Heart left ventricle (tissue), 16 donors: ENCODE measurements at regions of chr6 and their contacts with region 1.

Region 1: GRCh38 chr6:71393981-71394432 is 105.4 kb downstream of the OGFRL1 start:
- DNase-seq: no peak
- ATAC-seq: peak; percentile 29 to 52 (median 46)
- H3K4me3 ChIP-seq: no peak overlapping the region
- H3K27ac ChIP-seq: peak overlapping the region; percentile 20 to 76 (median 44)
- H3K4me1 ChIP-seq: peaks cover 5 to 81% (median 52%) of the 10 kb centered on the region in 12 donors
- H3K27me3 ChIP-seq: no peaks in the 10 kb centered on the region
- CTCF ChIP-seq: no peak
- POLR2A ChIP-seq: no peak

Region 2: DNA sequence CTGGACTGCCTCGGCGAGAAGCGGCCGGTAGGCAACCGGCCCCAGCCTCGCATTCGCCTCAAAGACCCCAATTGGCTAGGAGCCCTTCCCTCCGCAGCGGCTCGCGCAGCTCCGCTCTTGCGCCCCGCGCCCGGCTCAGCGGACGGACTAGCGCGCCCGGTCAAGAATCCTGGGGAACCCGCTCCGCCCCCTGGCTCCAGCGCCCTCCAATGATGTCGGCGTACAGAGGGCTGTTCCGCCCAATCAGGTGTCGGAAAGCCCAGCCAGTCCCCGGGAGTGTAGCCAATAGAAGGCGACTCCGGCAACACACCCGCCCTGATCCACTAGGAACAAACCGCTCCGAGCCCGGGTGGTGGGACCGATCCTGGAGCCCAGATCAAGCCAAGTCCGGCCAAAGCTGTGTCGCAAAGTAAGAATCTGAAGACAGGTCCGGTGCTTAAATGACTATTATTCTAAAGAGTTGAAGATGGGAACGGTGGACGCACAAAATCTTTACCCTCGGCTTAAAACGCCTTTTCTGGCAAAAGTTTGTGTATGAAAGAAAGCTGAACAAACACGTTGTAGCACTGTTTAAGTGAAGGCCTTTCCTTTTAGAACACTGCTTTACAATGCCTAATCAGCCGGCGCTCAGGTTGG is 26.8 kb after region 1 on chr6:
- intact Hi-C with region 1: loop called in 4 of 10 experiments (anchors 2 to 5 kb)
- DNase-seq: peak; percentile 95 to 98 (median 98)
- ATAC-seq: peak; percentile 98 to 99 (median 99)
- H3K4me3 ChIP-seq: peak overlapping the region; percentile 74 to 94 (median 88)
- H3K27ac ChIP-seq: peak overlapping the region; percentile 89 to 99 (median 97)
- H3K4me1 ChIP-seq: peaks cover 4 to 28% (median 19%) of the 10 kb centered on the region in 12 donors
- H3K27me3 ChIP-seq: peaks cover 0 to 20% (median 0%) of the 10 kb centered on the region in 9 donors
- CTCF ChIP-seq: peak in 1 of 12 donors; percentile 11
- POLR2A ChIP-seq: peak; percentile 87 to 99

Region 3: GRCh38 chr6:71481011-71481410 is 87.0 kb after region 1 on chr6:
- intact Hi-C with region 1: loop called in 1 of 10 experiments (anchors 2 kb)
- DNase-seq: no peak
- ATAC-seq: peak in 1 of 4 donors; percentile 33
- H3K4me3 ChIP-seq: no peak overlapping the region
- H3K27ac ChIP-seq: peak overlapping the region in 10 of 12 donors; percentile 19 to 83 (median 64)
- H3K4me1 ChIP-seq: peaks cover 0 to 43% (median 22%) of the 10 kb centered on the region in 12 donors
- H3K27me3 ChIP-seq: no peaks in the 10 kb centered on the region
- CTCF ChIP-seq: no peak
- POLR2A ChIP-seq: no peak

Region 4: DNA sequence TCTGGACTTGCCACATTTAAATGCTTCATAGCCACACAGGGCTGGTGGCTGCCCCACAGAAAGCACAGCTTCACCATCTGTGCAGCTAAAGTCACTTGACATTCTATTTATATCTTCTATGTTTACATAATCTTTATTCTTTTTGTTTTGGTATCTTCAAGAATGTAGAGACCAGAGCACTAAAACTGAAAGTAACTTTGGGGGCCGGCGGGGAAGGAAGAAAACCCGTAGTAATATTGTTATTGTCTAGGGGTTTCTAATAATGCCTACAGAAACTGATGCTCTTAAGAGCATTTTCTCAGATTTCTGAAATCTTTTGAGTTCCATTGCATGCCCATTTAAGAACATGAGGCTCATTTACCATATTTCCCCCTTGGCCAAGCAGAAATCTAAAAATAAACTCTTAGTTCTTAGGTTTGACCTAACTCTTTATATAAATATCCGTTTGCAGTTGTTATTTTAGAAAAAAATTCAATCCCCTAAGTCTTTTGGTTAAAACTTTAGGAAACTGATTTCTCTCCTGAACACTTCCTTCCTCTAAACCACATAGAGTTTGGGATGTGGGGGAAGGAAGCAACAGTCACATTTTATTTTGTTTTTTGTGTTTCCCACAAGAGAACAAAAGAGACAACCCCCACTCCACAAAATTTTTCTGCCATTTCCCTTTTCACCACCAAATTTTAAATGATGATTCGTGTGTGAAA is 102.2 kb after region 1 on chr6:
- intact Hi-C with region 1: loop called in 1 of 10 experiments (anchors 5 kb)
- DNase-seq: no peak
- ATAC-seq: peak in 3 of 4 donors; percentile 18 to 62 (median 39)
- H3K4me3 ChIP-seq: peak overlapping the region in 11 of 12 donors; percentile 4 to 53 (median 32)
- H3K27ac ChIP-seq: peak overlapping the region in 11 of 12 donors; percentile 6 to 80 (median 50)
- H3K4me1 ChIP-seq: peaks cover 0 to 19% (median 14%) of the 10 kb centered on the region in 12 donors
- H3K27me3 ChIP-seq: no peaks in the 10 kb centered on the region
- CTCF ChIP-seq: no peak
- POLR2A ChIP-seq: no peak